ENCODE measurements at regions of chrX and their contacts with region 1.

Region 1: DNA sequence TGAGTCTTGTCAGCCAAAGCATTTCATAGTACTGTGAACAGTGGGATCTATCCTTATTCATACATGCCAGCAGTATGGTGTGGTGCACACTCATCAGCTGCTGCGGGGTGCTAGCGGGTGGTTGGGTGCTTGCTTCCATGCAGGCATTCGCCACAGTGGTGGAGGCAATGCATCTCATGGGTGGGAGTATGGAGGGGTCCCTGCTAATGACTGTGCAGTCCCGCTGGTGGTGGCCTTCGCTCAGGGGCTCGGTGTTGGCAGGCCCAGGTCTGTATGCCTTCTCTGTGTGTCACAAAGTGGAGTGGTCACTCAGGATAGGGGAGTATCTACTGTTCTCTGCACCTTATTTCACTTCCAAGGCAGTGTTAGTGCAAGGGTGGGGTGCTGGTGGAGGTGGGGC is 122.6 kb downstream of the POU3F4 start:
- DNase-seq: no peak
- ATAC-seq: no peak
- H3K4me3 ChIP-seq: no peak overlapping the region
- H3K27ac ChIP-seq: no peak overlapping the region
- H3K4me1 ChIP-seq: no peaks in the 10 kb centered on the region
- H3K27me3 ChIP-seq: no peaks in the 10 kb centered on the region

Region 2: GRCh38 chrX:83469551-83469950 is 161.1 kb before region 1 on chrX:
- intact Hi-C with region 1: loop called in 1 of 2 experiments (anchors 10 kb)
- DNase-seq: no peak
- ATAC-seq: no peak
- H3K4me3 ChIP-seq: no peak overlapping the region
- H3K27ac ChIP-seq: no peak overlapping the region
- H3K4me1 ChIP-seq: no peaks in the 10 kb centered on the region
- H3K27me3 ChIP-seq: no peaks in the 10 kb centered on the region